ENCODE measurements at regions of chr2 and their contacts with region 1.

Region 1: GRCh38 chr2:27191053-27191829 is 20.6 kb upstream of the ATRAID start:
- DNase-seq: peak in 4 of 5 donors; percentile 63 to 83 (median 72)
- H3K4me3 ChIP-seq: no peak overlapping the region
- H3K27ac ChIP-seq: no peak overlapping the region
- H3K4me1 ChIP-seq: no peaks in the 10 kb centered on the region
- H3K27me3 ChIP-seq: no peaks in the 10 kb centered on the region
- CTCF ChIP-seq: peak; percentile 48 to 88 (median 74)
- EP300 ChIP-seq: no peak
- POLR2A ChIP-seq: no peak

Region 2: GRCh38 chr2:26792720-26793119 is 398.5 kb before region 1 on chr2:
- intact Hi-C with region 1: no loop called
- DNase-seq: no peak
- H3K4me3 ChIP-seq: no peak overlapping the region
- H3K27ac ChIP-seq: no peak overlapping the region
- H3K4me1 ChIP-seq: no peaks in the 10 kb centered on the region
- H3K27me3 ChIP-seq: no peaks in the 10 kb centered on the region
- CTCF ChIP-seq: no peak
- EP300 ChIP-seq: no peak
- POLR2A ChIP-seq: no peak

Region 3: GRCh38 chr2:27095745-27096651 is 95.2 kb before region 1 on chr2:
- intact Hi-C with region 1: loop called (anchors 5 kb)
- DNase-seq: peak; percentile 62 to 74 (median 72)
- H3K4me3 ChIP-seq: peak overlapping the region; percentile 11
- H3K27ac ChIP-seq: no peak overlapping the region
- H3K4me1 ChIP-seq: no peaks in the 10 kb centered on the region
- H3K27me3 ChIP-seq: no peaks in the 10 kb centered on the region
- CTCF ChIP-seq: no peak
- EP300 ChIP-seq: no peak
- POLR2A ChIP-seq: no peak

Region 4: GRCh38 chr2:27102329-27102728 is 88.9 kb before region 1 on chr2:
- intact Hi-C with region 1: loop called (anchors 5 kb)
- DNase-seq: no peak
- H3K4me3 ChIP-seq: no peak overlapping the region
- H3K27ac ChIP-seq: no peak overlapping the region
- H3K4me1 ChIP-seq: no peaks in the 10 kb centered on the region
- H3K27me3 ChIP-seq: no peaks in the 10 kb centered on the region
- CTCF ChIP-seq: no peak
- EP300 ChIP-seq: no peak
- POLR2A ChIP-seq: no peak

Region 5: GRCh38 chr2:27133905-27134780 is 57.1 kb before region 1 on chr2 and contains the start of gene PREB:
- intact Hi-C with region 1: loop called (anchors 2 to 5 kb)
- DNase-seq: peak; percentile 97 to 99 (median 99)
- H3K4me3 ChIP-seq: peak within 1 kb of the TSS; percentile 89
- H3K27ac ChIP-seq: peak within 1 kb of the TSS; percentile 66 to 83
- H3K4me1 ChIP-seq: peaks cover 6% of the 10 kb centered on the region
- H3K27me3 ChIP-seq: no peaks in the 10 kb centered on the region
- CTCF ChIP-seq: peak; percentile 17 to 51 (median 46)
- EP300 ChIP-seq: no peak
- POLR2A ChIP-seq: peak; percentile 89
- total RNA-seq, gene PREB: 42.7 to 113 (median 70.8) TPM